ENCODE measurements at regions of chr10 and their contacts with region 1.

Region 1: DNA sequence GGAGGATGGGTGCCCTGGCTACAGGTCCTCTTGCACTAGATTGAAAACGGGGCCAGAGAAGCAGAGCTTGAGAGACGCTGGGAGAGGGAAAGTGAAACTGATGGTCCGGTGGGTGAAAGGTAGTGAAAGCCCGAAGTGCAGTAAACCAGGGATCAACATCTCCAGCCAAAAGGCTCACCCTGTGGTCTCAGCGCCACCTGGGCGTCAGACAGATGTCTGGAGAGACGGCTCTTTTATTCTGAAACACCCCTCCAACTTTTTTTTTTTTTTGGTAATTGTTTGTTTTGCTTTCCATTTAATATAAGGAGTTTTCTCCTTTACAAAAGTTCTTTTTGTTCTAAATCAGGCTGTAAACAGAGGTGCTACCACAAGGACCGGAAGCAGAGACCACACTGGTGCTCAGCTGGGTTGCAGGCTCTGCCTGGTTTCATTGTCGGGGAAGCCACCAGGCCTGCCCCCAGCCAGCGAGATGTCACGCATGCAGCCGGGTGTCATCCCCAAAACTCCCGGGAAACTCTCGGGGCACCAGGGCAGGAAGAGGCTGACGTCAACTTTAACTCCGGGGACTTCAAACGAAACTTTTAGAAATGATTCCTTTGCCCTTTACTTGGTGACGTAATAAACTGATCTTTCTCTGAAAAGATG is 11.2 kb downstream of the IL2RA start:
- DNase-seq: peak; percentile 91 to 99 (median 94)
- H3K4me3 ChIP-seq: peak overlapping the region; percentile 49 to 76
- H3K4me3 Mint-ChIP-seq: peak overlapping the region; percentile 91 to 97 (median 94)
- H3K27ac ChIP-seq: peak overlapping the region; percentile 88
- H3K27ac Mint-ChIP-seq: peak overlapping the region; percentile 96 to 99 (median 98)
- H3K4me1 ChIP-seq: peaks cover 85% of the 10 kb centered on the region
- H3K4me1 Mint-ChIP-seq: peaks cover 61 to 92% (median 84%) of the 10 kb centered on the region in 4 donors
- H3K27me3 ChIP-seq: no peaks in the 10 kb centered on the region
- H3K27me3 Mint-ChIP-seq: no peaks in the 10 kb centered on the region

Region 2: GRCh38 chr10:5977471-5978229 is 73.3 kb before region 1 on chr10 and contains the start of gene IL15RA:
- CTCF ChIA-PET with region 1: interaction called, 4 read pairs
- POLR2A ChIA-PET with region 1: interaction called, 24 read pairs
- intact Hi-C with region 1: loop called (anchors 2 kb)
- DNase-seq: peak; percentile 76 to 92 (median 81)
- H3K4me3 ChIP-seq: peak within 1 kb of the TSS; percentile 79 to 96
- H3K4me3 Mint-ChIP-seq: peak within 1 kb of the TSS; percentile 95 to 99 (median 98)
- H3K27ac ChIP-seq: peak within 1 kb of the TSS; percentile 84
- H3K27ac Mint-ChIP-seq: peak within 1 kb of the TSS; percentile 93 to 98 (median 96)
- H3K4me1 ChIP-seq: peaks cover 23% of the 10 kb centered on the region
- H3K4me1 Mint-ChIP-seq: peaks cover 17 to 42% (median 29%) of the 10 kb centered on the region in 4 donors
- H3K27me3 ChIP-seq: no peaks in the 10 kb centered on the region
- H3K27me3 Mint-ChIP-seq: no peaks in the 10 kb centered on the region
- total RNA-seq, gene IL15RA: 11.1 to 14.7 TPM

Region 3: GRCh38 chr10:6027929-6028328 is 23.0 kb before region 1 on chr10:
- CTCF ChIA-PET with region 1: interaction called, 6 read pairs
- POLR2A ChIA-PET with region 1: interaction called, 25 read pairs
- intact Hi-C with region 1: no loop called
- DNase-seq: no peak
- H3K4me3 ChIP-seq: no peak overlapping the region
- H3K4me3 Mint-ChIP-seq: peak overlapping the region in 3 of 8 donors; percentile 34 to 41 (median 41)
- H3K27ac ChIP-seq: no peak overlapping the region
- H3K27ac Mint-ChIP-seq: peak overlapping the region in 4 of 7 donors; percentile 22 to 87 (median 59)
- H3K4me1 ChIP-seq: peaks cover 19% of the 10 kb centered on the region
- H3K4me1 Mint-ChIP-seq: peaks cover 17 to 53% (median 30%) of the 10 kb centered on the region in 4 donors
- H3K27me3 ChIP-seq: no peaks in the 10 kb centered on the region
- H3K27me3 Mint-ChIP-seq: no peaks in the 10 kb centered on the region

Region 4: GRCh38 chr10:6062101-6062771 is 11.3 kb after region 1 on chr10 and contains the start of gene IL2RA:
- CTCF ChIA-PET with region 1: interaction called, 9 read pairs
- POLR2A ChIA-PET with region 1: interaction called, 51 read pairs
- intact Hi-C with region 1: loop called (anchors 1 kb)
- DNase-seq: peak; percentile 69 to 86 (median 75)
- H3K4me3 ChIP-seq: peak within 1 kb of the TSS; percentile 71 to 89
- H3K4me3 Mint-ChIP-seq: peak within 1 kb of the TSS; percentile 97 to 99 (median 98)
- H3K27ac ChIP-seq: peak within 1 kb of the TSS; percentile 83
- H3K27ac Mint-ChIP-seq: peak within 1 kb of the TSS; percentile 95 to 98 (median 96)
- H3K4me1 ChIP-seq: peaks cover 80% of the 10 kb centered on the region
- H3K4me1 Mint-ChIP-seq: peaks cover 44 to 88% (median 65%) of the 10 kb centered on the region in 4 donors
- H3K27me3 ChIP-seq: no peaks in the 10 kb centered on the region
- H3K27me3 Mint-ChIP-seq: no peaks in the 10 kb centered on the region
- total RNA-seq, gene IL2RA: 15.1 to 17.1 TPM

Region 5: DNA sequence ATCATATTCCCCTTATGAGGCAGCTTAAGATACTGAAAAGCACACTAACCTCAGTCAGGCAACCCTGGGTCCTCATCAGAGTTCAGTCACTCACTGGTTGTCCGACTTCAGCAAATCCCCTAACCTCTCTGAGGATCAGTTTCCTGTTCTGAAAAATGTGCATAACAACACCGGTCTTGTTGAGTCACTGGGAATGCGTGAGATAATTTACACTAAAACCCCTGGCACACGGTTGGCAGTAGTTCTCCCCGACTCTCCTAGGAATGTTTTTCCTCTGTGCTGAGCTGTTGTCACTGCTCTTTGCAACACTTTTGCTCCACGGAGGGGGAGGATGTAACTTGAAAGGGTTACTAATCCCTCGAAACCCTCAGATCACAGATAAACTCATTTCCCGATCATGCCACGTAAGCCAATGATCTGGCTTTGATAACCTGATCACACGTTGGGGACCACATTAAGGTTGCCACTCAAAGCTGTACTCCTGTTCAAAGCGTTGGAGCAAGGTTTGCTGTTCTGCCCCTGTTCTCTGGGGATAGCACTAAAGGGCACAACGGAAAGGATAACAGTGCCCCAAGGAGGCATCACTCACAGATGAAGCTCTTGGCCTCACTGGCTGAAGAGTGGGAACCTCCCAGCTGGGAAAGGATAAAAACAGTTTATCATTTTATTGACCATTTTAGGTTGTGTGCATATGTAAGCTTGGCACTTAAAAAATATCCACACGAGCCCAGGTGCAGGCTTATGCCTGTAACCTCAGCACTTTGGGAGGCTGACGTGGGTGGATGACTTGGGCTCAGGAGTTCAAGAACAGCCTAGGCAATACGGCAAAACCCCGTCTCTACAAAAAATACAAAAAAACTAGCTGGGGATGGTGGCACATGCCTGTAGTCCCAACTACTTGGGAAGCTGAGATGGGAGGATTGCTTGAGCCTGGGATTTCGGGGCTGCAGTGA is 32.9 kb after region 1 on chr10:
- CTCF ChIA-PET with region 1: interaction called, 84 read pairs
- POLR2A ChIA-PET with region 1: interaction called, 74 read pairs
- intact Hi-C with region 1: loop called (anchors 1 kb)
- DNase-seq: peak; percentile 47 to 72 (median 61)
- H3K4me3 ChIP-seq: peak overlapping the region in 1 of 2 donors; percentile 28
- H3K4me3 Mint-ChIP-seq: peak overlapping the region; percentile 51 to 84 (median 76)
- H3K27ac ChIP-seq: no peak overlapping the region
- H3K27ac Mint-ChIP-seq: peak overlapping the region; percentile 21 to 88 (median 74)
- H3K4me1 ChIP-seq: peaks cover 38% of the 10 kb centered on the region
- H3K4me1 Mint-ChIP-seq: peaks cover 31 to 61% (median 42%) of the 10 kb centered on the region in 4 donors
- H3K27me3 ChIP-seq: no peaks in the 10 kb centered on the region
- H3K27me3 Mint-ChIP-seq: no peaks in the 10 kb centered on the region

Measured in CD4-positive, alpha-beta memory T cell (primary cell).